ENCODE measurements at regions of chr1 and their contacts with region 1.

Region 1: GRCh38 chr1:97820470-97821188 is 100.2 kb downstream of the DPYD start:
- DNase-seq: no peak
- ATAC-seq: peak in 3 of 8 donors; percentile 48 to 55 (median 52)
- H3K4me3 ChIP-seq: no peak overlapping the region
- H3K27ac ChIP-seq: no peak overlapping the region
- H3K4me1 ChIP-seq: peaks cover 0 to 10% (median 5%) of the 10 kb centered on the region in 9 donors
- H3K27me3 ChIP-seq: no peaks in the 10 kb centered on the region
- CTCF ChIP-seq: peak; percentile 21 to 74 (median 59)

Region 2: DNA sequence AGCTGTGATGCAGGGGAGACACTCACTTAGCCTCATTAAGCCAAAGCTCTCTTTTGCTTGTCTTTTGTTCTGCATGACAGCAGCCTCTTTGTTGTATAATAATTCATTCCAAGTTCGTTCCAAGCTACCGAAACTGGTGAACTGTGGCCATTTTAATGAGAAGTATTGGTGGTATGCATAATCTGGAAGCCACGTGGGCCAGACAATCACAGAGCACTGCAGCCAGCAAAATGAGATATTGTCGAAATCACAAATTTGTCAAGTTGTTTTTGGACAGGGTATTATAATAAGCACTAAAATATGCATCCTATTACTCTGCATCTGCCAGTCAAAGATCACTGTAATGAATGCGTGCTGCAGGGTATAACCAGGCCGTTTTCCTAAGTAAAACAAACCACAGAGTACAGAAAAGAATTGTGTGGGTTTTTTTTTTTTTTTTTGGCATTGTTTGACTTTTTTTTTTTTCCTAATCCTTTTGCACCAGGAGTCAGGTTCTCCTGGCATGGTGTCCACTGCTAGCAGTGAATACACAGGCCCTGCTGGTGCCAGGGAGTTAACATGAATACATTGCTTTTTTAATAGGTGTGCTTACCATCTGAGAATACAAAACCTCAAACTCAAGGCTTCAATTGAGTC is 675.2 kb before region 1 on chr1:
- intact Hi-C with region 1: loop called in 1 of 10 experiments (anchors 10 kb)
- DNase-seq: no peak
- ATAC-seq: no peak
- H3K4me3 ChIP-seq: no peak overlapping the region
- H3K27ac ChIP-seq: no peak overlapping the region
- H3K4me1 ChIP-seq: no peaks in the 10 kb centered on the region
- H3K27me3 ChIP-seq: no peaks in the 10 kb centered on the region
- CTCF ChIP-seq: no peak

Region 3: DNA sequence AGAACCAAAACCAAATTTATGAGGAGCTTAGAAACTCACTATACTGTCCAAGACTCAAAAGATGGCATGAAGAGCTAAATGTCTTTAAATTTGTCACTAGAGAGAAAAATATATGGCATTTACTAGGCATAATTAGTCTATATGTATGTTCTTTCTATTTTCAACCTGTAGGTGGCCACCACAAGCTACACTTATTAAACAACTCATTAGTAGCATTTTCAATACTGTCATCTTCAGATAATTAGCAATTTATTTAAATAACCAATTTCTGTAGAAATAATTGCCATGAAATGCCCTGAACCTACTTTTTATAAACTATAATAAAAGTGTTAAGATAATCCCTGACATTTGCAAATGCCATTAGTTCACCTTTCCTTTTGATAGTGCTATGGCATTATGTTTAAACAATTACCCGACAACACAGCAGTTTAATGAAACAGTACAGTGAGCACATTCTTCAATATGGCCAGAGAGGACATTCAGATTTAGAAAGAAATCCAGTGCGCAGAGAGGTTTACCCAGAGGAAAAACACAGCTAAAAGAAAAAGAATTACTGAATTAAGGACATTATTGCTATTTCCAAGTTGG is 576.6 kb before region 1 on chr1:
- intact Hi-C with region 1: loop called in 2 of 10 experiments (anchors 10 kb)
- DNase-seq: no peak
- ATAC-seq: no peak
- H3K4me3 ChIP-seq: no peak overlapping the region
- H3K27ac ChIP-seq: no peak overlapping the region
- H3K4me1 ChIP-seq: peaks cover 0 to 22% (median 3%) of the 10 kb centered on the region in 9 donors
- H3K27me3 ChIP-seq: no peaks in the 10 kb centered on the region
- CTCF ChIP-seq: peak; percentile 23 to 61 (median 48)

Region 4: DNA sequence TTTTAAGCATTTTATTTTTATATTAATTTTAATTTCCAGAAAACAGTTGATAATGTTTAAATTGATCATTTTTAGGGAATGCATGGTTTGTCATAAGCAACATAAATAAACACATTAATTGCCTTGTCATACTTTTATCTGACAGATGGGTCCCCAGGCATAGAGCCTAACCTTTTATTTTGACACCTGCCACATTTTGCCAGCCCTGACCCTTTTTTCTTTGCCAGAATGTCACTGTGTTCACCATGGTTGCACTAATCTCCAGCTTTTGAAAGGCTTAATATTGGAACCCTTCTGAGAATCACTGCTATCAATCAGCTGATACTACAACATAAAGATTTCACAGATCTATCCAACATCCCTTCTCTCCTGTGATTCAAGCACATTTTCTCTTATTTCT is 156.2 kb after region 1 on chr1:
- intact Hi-C with region 1: no loop called
- DNase-seq: no peak
- ATAC-seq: no peak
- H3K4me3 ChIP-seq: no peak overlapping the region
- H3K27ac ChIP-seq: no peak overlapping the region
- H3K4me1 ChIP-seq: no peaks in the 10 kb centered on the region
- H3K27me3 ChIP-seq: peaks cover 0 to 4% (median 0%) of the 10 kb centered on the region in 7 donors
- CTCF ChIP-seq: no peak